MCF 10A (cell line): ENCODE measurements at regions of chr14 and their contacts with region 1.

Region 1: GRCh38 chr14:68548194-68549056 is 244.4 kb downstream of the ZFP36L1 start:
- DNase-seq: peak; percentile 98
- H3K4me3 Mint-ChIP-seq: peak overlapping the region; percentile 69
- H3K27ac Mint-ChIP-seq: peak overlapping the region; percentile 98
- H3K4me1 Mint-ChIP-seq: peaks cover 86% of the 10 kb centered on the region
- H3K27me3 Mint-ChIP-seq: no peaks in the 10 kb centered on the region
- CTCF ChIP-seq: no peak

Region 2: DNA sequence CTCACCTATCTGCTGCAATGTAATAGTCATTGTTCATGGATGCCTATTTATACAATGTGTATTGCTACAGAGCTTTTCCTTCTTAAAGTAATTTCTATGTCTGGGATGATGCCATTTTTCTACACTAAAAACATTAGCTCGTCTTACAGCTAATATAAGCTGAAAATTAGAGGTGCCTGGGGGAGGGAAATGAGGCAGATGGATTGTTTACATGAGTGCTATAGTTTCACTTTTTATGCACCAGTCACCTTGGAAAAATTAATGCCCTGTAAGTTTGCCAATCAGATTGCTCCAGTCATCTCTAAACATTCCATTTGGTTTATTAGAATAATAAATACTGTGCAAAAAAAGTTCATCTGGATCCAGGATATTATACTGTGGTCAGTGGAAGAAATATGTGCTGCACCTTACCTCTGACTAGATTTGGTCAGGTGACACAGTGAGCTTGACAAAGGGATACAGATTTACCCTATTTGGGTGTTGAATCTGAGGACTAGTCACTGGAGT is 292.7 kb before region 1 on chr14:
- CTCF ChIA-PET with region 1: interaction called, 3 read pairs
- POLR2A ChIA-PET with region 1: interaction called, 67 read pairs
- intact Hi-C with region 1: loop called (anchors 1 kb)
- DNase-seq: no peak
- H3K4me3 Mint-ChIP-seq: no peak overlapping the region
- H3K27ac Mint-ChIP-seq: peak overlapping the region; percentile 93
- H3K4me1 Mint-ChIP-seq: peaks cover 41% of the 10 kb centered on the region
- H3K27me3 Mint-ChIP-seq: no peaks in the 10 kb centered on the region
- CTCF ChIP-seq: no peak

Region 3: DNA sequence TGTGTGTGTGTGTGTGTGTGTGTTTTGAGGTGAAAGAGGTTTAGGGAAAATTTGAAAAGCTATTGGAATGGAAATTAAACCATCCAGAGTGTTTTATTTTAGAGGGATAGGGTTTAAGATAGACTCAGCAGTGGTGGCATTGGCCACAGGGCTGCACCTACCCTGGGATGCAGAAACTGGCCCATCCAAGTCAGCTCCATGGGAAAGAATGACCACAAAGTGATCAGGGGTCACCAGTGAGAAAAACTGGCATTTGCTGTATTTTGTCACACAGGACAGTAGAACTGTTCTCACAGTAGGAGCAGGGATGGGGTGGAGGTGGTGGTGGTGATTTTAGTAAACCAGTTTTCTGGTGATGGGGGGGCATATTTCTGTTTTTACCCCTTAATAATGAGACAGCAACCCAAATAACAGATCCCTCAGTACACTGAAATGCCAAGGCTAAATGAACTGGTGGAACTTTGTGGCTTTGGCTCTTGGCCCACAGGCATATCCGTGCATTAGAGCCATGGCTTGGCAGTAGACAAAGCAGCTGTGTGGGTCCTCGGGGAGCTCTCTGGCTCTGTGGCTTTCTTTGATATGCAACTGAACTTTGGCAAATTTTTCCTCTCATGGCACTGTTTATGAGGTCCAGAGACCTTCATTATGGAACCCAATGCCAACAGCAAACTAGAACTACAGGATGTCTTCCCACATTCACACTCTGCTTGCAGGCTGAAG is 103.8 kb before region 1 on chr14:
- CTCF ChIA-PET with region 1: no interaction called
- POLR2A ChIA-PET with region 1: no interaction called
- intact Hi-C with region 1: no loop called
- DNase-seq: peak; percentile 40
- H3K4me3 Mint-ChIP-seq: no peak overlapping the region
- H3K27ac Mint-ChIP-seq: peak overlapping the region; percentile 25
- H3K4me1 Mint-ChIP-seq: peaks cover 15% of the 10 kb centered on the region
- H3K27me3 Mint-ChIP-seq: no peaks in the 10 kb centered on the region
- CTCF ChIP-seq: no peak

Region 4: DNA sequence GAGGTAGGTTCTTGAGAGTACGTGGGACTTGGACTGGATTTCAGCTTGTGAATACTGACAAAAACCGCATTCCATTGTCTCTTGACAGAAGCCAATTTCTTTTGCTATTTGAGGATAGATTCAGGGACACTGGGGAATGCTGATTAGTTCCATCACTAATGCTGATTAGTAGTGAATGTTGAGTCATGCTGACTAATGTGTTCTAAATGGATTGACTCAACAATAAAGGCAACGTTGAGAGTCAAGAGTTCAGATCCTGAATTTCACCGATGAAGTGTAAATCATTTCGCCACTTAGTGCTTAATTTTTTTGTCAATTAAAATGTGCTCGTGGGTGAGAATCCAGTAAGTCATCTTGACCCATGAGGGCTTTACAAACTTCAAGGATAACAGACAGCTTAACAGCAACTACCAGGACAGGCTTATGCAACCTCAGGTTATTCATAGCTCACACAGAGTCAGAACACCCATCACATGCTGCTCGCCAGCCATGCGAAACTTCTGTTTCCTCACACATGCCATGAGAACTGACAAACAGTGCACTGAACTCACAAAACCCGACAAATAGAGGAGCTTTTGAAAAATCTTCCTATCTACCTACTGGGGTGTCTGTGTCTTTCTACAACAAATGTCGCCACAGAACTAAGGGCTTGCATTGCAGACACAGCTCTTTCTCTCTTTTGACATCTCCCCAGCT is 72.1 kb before region 1 on chr14:
- CTCF ChIA-PET with region 1: no interaction called
- POLR2A ChIA-PET with region 1: interaction called, 68 read pairs
- intact Hi-C with region 1: no loop called
- DNase-seq: peak; percentile 90
- H3K4me3 Mint-ChIP-seq: peak overlapping the region; percentile 0
- H3K27ac Mint-ChIP-seq: peak overlapping the region; percentile 92
- H3K4me1 Mint-ChIP-seq: peaks cover 42% of the 10 kb centered on the region
- H3K27me3 Mint-ChIP-seq: no peaks in the 10 kb centered on the region
- CTCF ChIP-seq: no peak

Region 5: DNA sequence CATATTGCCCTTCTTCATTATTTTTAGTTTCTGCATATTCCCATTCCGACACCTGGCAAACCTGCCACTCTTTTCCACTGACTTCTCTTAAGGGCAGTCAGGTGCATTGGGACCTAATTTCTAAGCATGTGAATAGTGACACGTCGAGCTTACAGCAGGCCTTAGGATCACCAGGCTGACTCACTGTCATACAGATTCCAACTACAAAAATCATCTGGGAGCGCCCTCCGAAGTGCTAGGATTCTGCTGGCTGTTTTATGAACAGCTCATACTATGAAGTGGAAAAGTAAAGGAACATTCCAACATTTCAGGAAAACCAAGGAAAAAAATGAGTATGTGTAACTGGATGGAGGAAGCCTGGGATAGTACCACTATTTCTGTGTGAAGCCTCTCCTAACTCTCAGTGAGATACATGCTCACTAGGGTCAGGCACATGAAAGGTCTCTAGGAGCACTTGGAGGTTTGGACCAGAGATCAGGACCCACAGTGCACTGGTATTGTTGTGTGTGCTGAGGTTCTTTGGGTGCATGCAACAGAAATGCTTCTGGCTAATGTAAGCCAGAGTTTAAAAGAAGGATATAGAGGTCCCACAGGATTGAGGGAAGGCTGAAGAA is 12.9 kb before region 1 on chr14:
- CTCF ChIA-PET with region 1: interaction called, 3 read pairs
- POLR2A ChIA-PET with region 1: interaction called, 81 read pairs
- intact Hi-C with region 1: no loop called
- DNase-seq: peak; percentile 60
- H3K4me3 Mint-ChIP-seq: no peak overlapping the region
- H3K27ac Mint-ChIP-seq: peak overlapping the region; percentile 72
- H3K4me1 Mint-ChIP-seq: peaks cover 26% of the 10 kb centered on the region
- H3K27me3 Mint-ChIP-seq: no peaks in the 10 kb centered on the region
- CTCF ChIP-seq: no peak

Region 6: DNA sequence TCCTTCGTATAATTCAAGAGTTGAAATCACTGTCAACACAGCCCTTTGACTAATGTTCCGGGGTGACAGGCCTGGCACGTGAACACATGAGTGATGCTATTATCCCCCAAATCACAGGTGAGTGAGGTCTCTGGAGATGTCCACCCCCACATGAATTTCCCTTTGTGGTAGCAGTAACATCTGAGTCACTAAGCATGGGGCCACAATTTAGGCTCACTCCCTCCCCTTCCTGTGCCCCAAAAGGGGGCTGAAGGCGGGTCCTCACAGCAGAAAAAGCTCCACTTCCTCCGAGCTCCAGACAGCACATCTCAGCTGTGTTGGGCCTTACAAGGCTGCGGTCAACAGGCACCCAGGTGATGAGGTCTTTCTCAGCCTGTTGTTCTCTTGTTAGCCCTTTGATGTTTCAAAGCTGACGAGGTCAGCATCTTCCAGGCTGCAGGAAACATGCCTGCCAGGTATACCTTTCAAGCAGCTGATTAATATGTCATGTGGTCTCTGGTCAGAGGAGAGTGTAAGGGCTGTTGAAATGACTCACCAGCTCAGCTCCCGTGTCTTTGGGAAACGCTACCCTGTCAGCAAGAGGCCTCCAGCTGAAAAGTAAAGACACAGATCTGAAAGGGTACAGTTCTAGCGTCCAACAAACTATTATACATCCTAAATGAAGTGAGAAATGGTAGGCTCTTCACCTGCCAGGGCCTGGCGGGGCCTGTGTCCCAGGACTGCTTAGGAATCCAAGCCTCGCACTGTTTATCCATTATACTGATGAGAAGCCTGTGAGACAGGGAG is 137.2 kb after region 1 on chr14:
- CTCF ChIA-PET with region 1: interaction called, 5 read pairs
- POLR2A ChIA-PET with region 1: interaction called, 110 read pairs
- intact Hi-C with region 1: loop called (anchors 2 kb)
- DNase-seq: peak; percentile 91
- H3K4me3 Mint-ChIP-seq: peak overlapping the region; percentile 1
- H3K27ac Mint-ChIP-seq: peak overlapping the region; percentile 96
- H3K4me1 Mint-ChIP-seq: peaks cover 67% of the 10 kb centered on the region
- H3K27me3 Mint-ChIP-seq: no peaks in the 10 kb centered on the region
- CTCF ChIP-seq: no peak

Region 7: GRCh38 chr14:68788996-68789820 is 240.8 kb after region 1 on chr14:
- CTCF ChIA-PET with region 1: interaction called, 7 read pairs
- POLR2A ChIA-PET with region 1: interaction called, 403 read pairs
- intact Hi-C with region 1: loop called (anchors 1 kb)
- DNase-seq: peak; percentile 79
- H3K4me3 Mint-ChIP-seq: peak overlapping the region; percentile 98
- H3K27ac Mint-ChIP-seq: peak overlapping the region; percentile 97
- H3K4me1 Mint-ChIP-seq: peaks cover 30% of the 10 kb centered on the region
- H3K27me3 Mint-ChIP-seq: no peaks in the 10 kb centered on the region
- CTCF ChIP-seq: peak; percentile 69